GM13977 (cell line): ENCODE measurements at regions of chr5 and their contacts with region 1.

Region 1: GRCh38 chr5:134904630-134905245 is at the start of gene PCBD2:
- DNase-seq: peak; percentile 90
- CTCF ChIP-seq: peak; percentile 98

Region 2: GRCh38 chr5:134769206-134769605 is 135.5 kb before region 1 on chr5:
- in situ Hi-C with region 1: loop called (anchors 10 kb)
- DNase-seq: no peak
- CTCF ChIP-seq: no peak